Activated CD4-positive, alpha-beta T cell treated with anti-CD3 and anti-CD28 coated beads for 36 hours (primary cell): ENCODE measurements at regions of chr15 and their contacts with region 1.

Region 1: DNA sequence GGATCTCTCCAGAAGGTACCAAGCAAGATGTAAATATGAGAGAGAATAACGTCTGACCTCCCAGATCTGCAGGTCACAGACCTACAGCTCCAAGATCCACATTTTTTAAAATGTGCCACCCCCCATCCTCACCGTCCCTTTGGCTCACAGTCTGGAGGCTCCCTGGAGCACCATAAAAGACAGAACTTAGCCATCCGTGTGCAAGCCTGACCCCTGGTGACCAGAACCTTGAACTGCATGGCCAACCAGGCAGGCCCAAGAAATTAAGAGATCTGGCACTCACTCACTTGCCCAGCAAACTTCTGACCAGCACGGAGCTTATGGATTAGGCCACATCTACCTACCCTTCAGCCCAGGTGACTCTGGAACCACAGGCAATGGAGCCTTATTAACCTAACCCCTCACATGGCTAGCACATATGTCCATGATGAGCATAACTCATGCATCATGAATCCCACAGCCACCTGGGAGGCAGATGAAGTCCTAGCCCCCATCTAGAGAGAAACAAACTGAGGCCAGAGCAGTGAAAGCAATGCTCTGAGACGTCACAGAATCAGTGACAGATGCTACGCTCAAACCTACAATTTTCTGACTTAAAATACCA is 275.3 kb downstream of the UACA start:
- DNase-seq: peak; percentile 84
- ATAC-seq: no peak
- H3K4me3 Mint-ChIP-seq: no peak overlapping the region
- H3K27ac Mint-ChIP-seq: no peak overlapping the region
- H3K4me1 Mint-ChIP-seq: peaks cover 57% of the 10 kb centered on the region
- H3K27me3 Mint-ChIP-seq: peaks cover 31% of the 10 kb centered on the region

Region 2: GRCh38 chr15:69713726-69714559 is 774.2 kb before region 1 on chr15:
- CTCF ChIA-PET with region 1: no interaction called
- POLR2A ChIA-PET with region 1: interaction called, 3 read pairs
- intact Hi-C with region 1: loop called (anchors 2 to 5 kb)
- DNase-seq: peak; percentile 85
- ATAC-seq: peak; percentile 96
- H3K4me3 Mint-ChIP-seq: peak overlapping the region; percentile 21
- H3K27ac Mint-ChIP-seq: peak overlapping the region; percentile 85
- H3K4me1 Mint-ChIP-seq: peaks cover 60% of the 10 kb centered on the region
- H3K27me3 Mint-ChIP-seq: peaks cover 7% of the 10 kb centered on the region

Region 3: GRCh38 chr15:70140543-70141375 is 347.3 kb before region 1 on chr15:
- CTCF ChIA-PET with region 1: no interaction called
- POLR2A ChIA-PET with region 1: interaction called, 3 read pairs
- intact Hi-C with region 1: loop called (anchors 2 kb)
- DNase-seq: peak; percentile 55
- ATAC-seq: peak; percentile 32
- H3K4me3 Mint-ChIP-seq: peak overlapping the region; percentile 8
- H3K27ac Mint-ChIP-seq: peak overlapping the region; percentile 40
- H3K4me1 Mint-ChIP-seq: peaks cover 34% of the 10 kb centered on the region
- H3K27me3 Mint-ChIP-seq: peaks cover 21% of the 10 kb centered on the region

Region 4: GRCh38 chr15:70461992-70462391 is 26.1 kb before region 1 on chr15:
- CTCF ChIA-PET with region 1: interaction called, 27 read pairs
- POLR2A ChIA-PET with region 1: no interaction called
- intact Hi-C with region 1: loop called in 1 of 2 experiments (anchors 2 kb)
- DNase-seq: no peak
- ATAC-seq: no peak
- H3K4me3 Mint-ChIP-seq: no peak overlapping the region
- H3K27ac Mint-ChIP-seq: no peak overlapping the region
- H3K4me1 Mint-ChIP-seq: peaks cover 10% of the 10 kb centered on the region
- H3K27me3 Mint-ChIP-seq: peaks cover 11% of the 10 kb centered on the region

Region 5: GRCh38 chr15:70504299-70504951 is 16.3 kb after region 1 on chr15:
- CTCF ChIA-PET with region 1: interaction called, 18 read pairs
- POLR2A ChIA-PET with region 1: interaction called, 14 read pairs
- intact Hi-C with region 1: loop called (anchors 1 kb)
- DNase-seq: peak; percentile 76
- ATAC-seq: peak; percentile 31
- H3K4me3 Mint-ChIP-seq: no peak overlapping the region
- H3K27ac Mint-ChIP-seq: peak overlapping the region; percentile 79
- H3K4me1 Mint-ChIP-seq: peaks cover 77% of the 10 kb centered on the region
- H3K27me3 Mint-ChIP-seq: peaks cover 2% of the 10 kb centered on the region

Region 6: GRCh38 chr15:70833897-70834765 is 346.0 kb after region 1 on chr15:
- CTCF ChIA-PET with region 1: no interaction called
- POLR2A ChIA-PET with region 1: no interaction called
- intact Hi-C with region 1: no loop called
- DNase-seq: no peak
- ATAC-seq: no peak
- H3K4me3 Mint-ChIP-seq: no peak overlapping the region
- H3K27ac Mint-ChIP-seq: no peak overlapping the region
- H3K4me1 Mint-ChIP-seq: no peaks in the 10 kb centered on the region
- H3K27me3 Mint-ChIP-seq: peaks cover 4% of the 10 kb centered on the region